H1 (cell line): ENCODE measurements at regions of chr11 and their contacts with region 1.

Region 1: GRCh38 chr11:76459299-76459698 is 14.5 kb downstream of the EMSY start:
- DNase-seq: no peak
- H3K4me3 ChIP-seq: no peak overlapping the region
- H3K27ac ChIP-seq: no peak overlapping the region
- H3K4me1 ChIP-seq: peaks cover 0 to 28% (median 7%) of the 10 kb centered on the region in 4 experiments; a peak in 3 of 7 replicates
- H3K27me3 ChIP-seq: no peaks in the 10 kb centered on the region
- CTCF ChIP-seq: peak in 2 of 3 experiments; percentile 15 to 51; a peak in 2 of 4 replicates
- EP300 ChIP-seq: no peak
- POLR2A ChIP-seq: no peak
- RAD21 ChIP-seq: peak; percentile 33; a peak in 3 of 4 replicates

Region 2: DNA sequence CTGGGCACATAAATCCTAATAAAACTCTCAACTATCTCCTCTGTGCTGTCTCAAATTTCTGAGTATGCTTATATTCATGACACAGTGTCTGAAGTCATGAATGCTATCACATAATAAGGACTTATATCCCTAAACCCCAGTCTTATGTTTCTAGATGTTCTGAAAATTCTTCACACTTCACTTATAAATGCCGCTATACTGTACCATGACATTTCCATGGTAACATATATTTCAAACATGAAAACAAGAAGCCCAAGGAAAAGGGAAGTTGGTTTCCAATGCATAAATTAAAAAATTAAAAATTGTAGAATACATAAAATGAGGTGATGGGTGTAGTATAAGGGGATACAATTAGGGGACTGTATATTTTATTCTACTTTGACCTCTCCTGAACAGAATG is 66.4 kb before region 1 on chr11:
- CTCF ChIA-PET with region 1: no interaction called
- POLR2A ChIA-PET with region 1: no interaction called
- DNase-seq: no peak
- H3K4me3 ChIP-seq: no peak overlapping the region
- H3K27ac ChIP-seq: no peak overlapping the region
- H3K4me1 ChIP-seq: no peaks in the 10 kb centered on the region
- H3K27me3 ChIP-seq: no peaks in the 10 kb centered on the region
- CTCF ChIP-seq: no peak
- EP300 ChIP-seq: no peak
- POLR2A ChIP-seq: no peak
- RAD21 ChIP-seq: no peak

Region 3: GRCh38 chr11:76444384-76445123 is 14.7 kb before region 1 on chr11 and contains the start of gene EMSY:
- CTCF ChIA-PET with region 1: interaction called, 21 read pairs
- POLR2A ChIA-PET with region 1: interaction called, 87 read pairs
- DNase-seq: peak; percentile 89 to 98
- H3K4me3 ChIP-seq: peak within 1 kb of the TSS; percentile 77 to 99 (median 96)
- H3K27ac ChIP-seq: peak within 1 kb of the TSS; percentile 98
- H3K4me1 ChIP-seq: peaks cover 0 to 20% (median 1%) of the 10 kb centered on the region in 4 experiments; a peak in 5 of 7 replicates
- H3K27me3 ChIP-seq: no peaks in the 10 kb centered on the region
- CTCF ChIP-seq: no peak
- EP300 ChIP-seq: no peak
- POLR2A ChIP-seq: peak; percentile 98
- RAD21 ChIP-seq: no peak
- total RNA-seq, gene EMSY: 32.2 and 34.6 TPM in 2 replicates

Region 4: DNA sequence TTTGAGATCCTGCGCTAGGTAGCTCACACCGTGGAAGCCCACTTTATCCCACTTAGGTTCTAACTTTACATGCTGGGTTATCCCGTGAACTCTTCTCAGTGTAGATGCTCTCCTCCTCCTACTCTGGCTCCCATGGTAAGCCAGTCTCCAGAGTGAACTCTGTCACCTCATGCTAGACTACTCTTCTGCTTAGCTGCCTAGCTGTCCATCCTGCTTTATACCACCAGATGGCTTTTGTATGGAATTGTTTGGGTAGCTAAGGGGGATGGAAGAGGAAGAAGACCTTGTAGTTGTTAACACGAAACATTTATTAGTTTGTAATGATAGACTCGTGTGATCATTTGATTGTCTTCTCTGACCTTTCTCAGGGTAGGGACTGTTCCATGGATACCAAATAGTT is 32.4 kb after region 1 on chr11:
- CTCF ChIA-PET with region 1: interaction called, 16 read pairs
- POLR2A ChIA-PET with region 1: no interaction called
- DNase-seq: no peak
- H3K4me3 ChIP-seq: no peak overlapping the region
- H3K27ac ChIP-seq: no peak overlapping the region
- H3K4me1 ChIP-seq: no peaks in the 10 kb centered on the region
- H3K27me3 ChIP-seq: no peaks in the 10 kb centered on the region
- CTCF ChIP-seq: peak in 1 of 3 experiments; percentile 24; a peak in 1 of 4 replicates
- EP300 ChIP-seq: no peak
- POLR2A ChIP-seq: no peak
- RAD21 ChIP-seq: no peak

Region 5: GRCh38 chr11:76512851-76513653 is 53.8 kb after region 1 on chr11:
- CTCF ChIA-PET with region 1: interaction called, 19 read pairs
- POLR2A ChIA-PET with region 1: interaction called, 4 read pairs
- DNase-seq: no peak
- H3K4me3 ChIP-seq: no peak overlapping the region
- H3K27ac ChIP-seq: no peak overlapping the region
- H3K4me1 ChIP-seq: peaks cover 2 to 9% (median 6%) of the 10 kb centered on the region in 4 experiments; a peak in 6 of 7 replicates
- H3K27me3 ChIP-seq: no peaks in the 10 kb centered on the region
- CTCF ChIP-seq: peak in 2 of 3 experiments; percentile 18 to 44; a peak in 2 of 4 replicates
- EP300 ChIP-seq: no peak
- POLR2A ChIP-seq: no peak
- RAD21 ChIP-seq: peak in 1 of 2 experiments; percentile 71